Thyroid gland (tissue), 4 donors: ENCODE measurements at regions of chr11 and their contacts with region 1.

Region 1: DNA sequence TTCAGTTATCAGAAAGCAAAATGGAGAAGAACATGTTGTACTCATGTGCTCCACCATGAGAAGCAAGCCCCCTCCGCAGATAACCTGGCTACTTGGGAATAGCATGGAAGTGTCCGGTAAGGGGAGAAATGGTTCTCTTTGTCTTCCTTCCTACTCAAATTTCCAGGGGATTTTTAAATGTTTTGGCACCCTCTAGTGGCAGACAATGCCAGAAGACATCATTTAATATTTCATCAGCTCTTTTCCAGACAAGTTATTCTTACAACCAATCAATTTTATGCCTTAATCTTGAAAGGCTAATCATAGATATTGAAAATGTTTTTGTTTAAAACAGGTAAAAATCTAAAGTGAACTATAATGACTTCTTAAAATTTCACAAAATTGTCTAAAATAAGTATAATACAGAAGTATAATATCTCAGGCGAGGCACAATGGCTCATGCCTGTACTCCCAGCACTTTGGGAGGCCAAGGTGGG is 15.7 kb downstream of the CRTAM start:
- DNase-seq: peak; percentile 50 to 51
- H3K4me3 ChIP-seq: no peak overlapping the region
- H3K27ac ChIP-seq: no peak overlapping the region
- H3K4me1 ChIP-seq: no peaks in the 10 kb centered on the region
- H3K27me3 ChIP-seq: no peaks in the 10 kb centered on the region
- CTCF ChIP-seq: peak; percentile 46 to 84 (median 67)
- POLR2A ChIP-seq: no peak

Region 2: DNA sequence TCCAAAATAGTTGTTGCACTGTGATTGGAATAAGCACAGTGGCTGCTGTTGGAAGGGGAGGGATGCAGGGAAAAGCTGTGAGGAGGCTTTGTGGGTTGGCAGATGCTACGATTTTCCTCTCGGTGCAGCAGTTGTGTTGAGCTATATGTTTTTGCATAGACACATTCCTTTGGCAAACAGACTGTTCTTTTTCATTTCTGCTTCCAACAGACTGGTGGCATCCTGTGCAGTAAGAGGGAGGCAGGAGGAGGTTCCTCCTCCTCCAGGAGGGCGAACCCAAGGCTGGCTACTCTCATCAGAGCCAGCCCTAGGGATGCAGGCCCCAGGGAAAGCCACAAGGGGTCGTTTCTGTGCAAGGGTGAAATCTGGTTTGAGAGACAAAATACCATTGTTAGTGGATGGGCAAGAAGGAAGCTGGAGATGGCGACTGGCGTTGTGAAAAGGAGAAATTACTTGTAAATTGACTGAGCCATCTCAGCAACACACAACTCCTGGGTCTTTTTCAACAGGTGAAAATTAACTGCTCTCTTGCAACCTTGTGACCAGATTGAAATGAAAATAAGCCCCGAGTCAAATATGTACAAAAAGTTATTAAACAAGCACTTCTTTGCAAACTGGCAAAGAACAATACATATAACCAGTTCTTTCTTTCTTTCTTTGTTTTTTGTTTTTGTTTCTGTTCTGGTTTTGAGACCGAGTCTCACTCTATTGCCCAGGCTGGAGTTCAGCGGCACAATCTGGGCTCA is 225.0 kb before region 1 on chr11:
- intact Hi-C with region 1: loop called (anchors 10 kb)
- DNase-seq: peak; percentile 55 to 61
- H3K4me3 ChIP-seq: no peak overlapping the region
- H3K27ac ChIP-seq: no peak overlapping the region
- H3K4me1 ChIP-seq: peaks cover 0 to 3% of the 10 kb centered on the region in 2 donors
- H3K27me3 ChIP-seq: no peaks in the 10 kb centered on the region
- CTCF ChIP-seq: peak; percentile 12 to 76 (median 60)
- POLR2A ChIP-seq: no peak

Region 3: DNA sequence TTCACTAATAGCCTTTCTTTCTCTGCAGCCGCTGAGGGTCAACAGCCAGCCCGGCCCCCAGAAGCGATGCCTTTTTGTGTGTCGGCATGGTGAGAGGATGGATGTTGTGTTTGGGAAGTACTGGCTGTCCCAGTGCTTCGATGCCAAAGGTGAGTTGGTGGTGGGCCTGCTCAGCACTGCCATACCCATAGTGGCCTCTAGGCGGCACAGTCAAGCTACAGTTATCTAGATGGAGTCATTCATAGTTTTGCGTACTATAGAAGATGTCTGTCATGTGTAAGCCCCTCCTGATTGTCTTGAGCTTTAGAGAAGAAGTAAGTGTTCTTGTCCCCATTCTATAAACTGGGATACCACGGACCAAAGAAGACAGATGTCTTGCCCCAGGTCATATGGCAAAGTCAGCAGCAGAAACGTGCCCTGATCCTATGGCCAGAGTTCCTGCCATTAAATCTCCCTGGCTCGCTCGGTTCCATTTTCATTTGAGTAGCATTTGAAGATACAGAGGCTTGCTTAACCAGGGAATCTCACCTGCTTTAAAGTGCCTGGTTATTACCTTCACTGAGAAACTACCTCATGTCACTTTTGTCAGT is 57.8 kb before region 1 on chr11:
- intact Hi-C with region 1: loop called (anchors 5 kb)
- DNase-seq: peak; percentile 66 to 71
- H3K4me3 ChIP-seq: no peak overlapping the region
- H3K27ac ChIP-seq: no peak overlapping the region
- H3K4me1 ChIP-seq: no peaks in the 10 kb centered on the region
- H3K27me3 ChIP-seq: no peaks in the 10 kb centered on the region
- CTCF ChIP-seq: peak; percentile 84 to 94 (median 91)
- POLR2A ChIP-seq: no peak

Region 4: GRCh38 chr11:123282597-123282996 is 428.6 kb after region 1 on chr11:
- intact Hi-C with region 1: no loop called
- DNase-seq: no peak
- H3K4me3 ChIP-seq: no peak overlapping the region
- H3K27ac ChIP-seq: no peak overlapping the region
- H3K4me1 ChIP-seq: no peaks in the 10 kb centered on the region
- H3K27me3 ChIP-seq: no peaks in the 10 kb centered on the region
- CTCF ChIP-seq: no peak
- POLR2A ChIP-seq: no peak